ENCODE measurements at regions of chr12 and their contacts with region 1.

Region 1: GRCh38 chr12:30754709-30755394 is at the start of gene CAPRIN2:
- DNase-seq: peak; percentile 93 to 97 (median 94)
- H3K4me3 ChIP-seq: peak within 1 kb of the TSS; percentile 71 to 88 (median 83)
- H3K27ac ChIP-seq: no peak within 1 kb of the TSS
- H3K4me1 ChIP-seq: peaks cover 8 to 24% (median 16%) of the 10 kb centered on the region in 4 experiments
- H3K27me3 ChIP-seq: no peaks in the 10 kb centered on the region

Region 2: GRCh38 chr12:30795410-30796312 is 40.8 kb after region 1 on chr12:
- CTCF ChIA-PET with region 1: interaction called, 17 read pairs
- POLR2A ChIA-PET with region 1: interaction called, 4 read pairs
- DNase-seq: peak; percentile 54 to 87 (median 80)
- H3K4me3 ChIP-seq: peak overlapping the region; percentile 31 to 83 (median 63)
- H3K27ac ChIP-seq: no peak overlapping the region
- H3K4me1 ChIP-seq: peaks cover 0 to 23% (median 17%) of the 10 kb centered on the region in 4 experiments
- H3K27me3 ChIP-seq: peaks cover 8 to 38% (median 20%) of the 10 kb centered on the region in 5 experiments

Region 3: GRCh38 chr12:30839643-30840220 is 84.9 kb after region 1 on chr12:
- CTCF ChIA-PET with region 1: no interaction called
- POLR2A ChIA-PET with region 1: no interaction called
- DNase-seq: no peak
- H3K4me3 ChIP-seq: no peak overlapping the region
- H3K27ac ChIP-seq: no peak overlapping the region
- H3K4me1 ChIP-seq: peaks cover 0 to 3% (median 1%) of the 10 kb centered on the region in 4 experiments
- H3K27me3 ChIP-seq: peaks cover 0 to 9% (median 6%) of the 10 kb centered on the region in 5 experiments